GM12878 (cell line): ENCODE measurements at regions of chr1 and their contacts with region 1.

Region 1: DNA sequence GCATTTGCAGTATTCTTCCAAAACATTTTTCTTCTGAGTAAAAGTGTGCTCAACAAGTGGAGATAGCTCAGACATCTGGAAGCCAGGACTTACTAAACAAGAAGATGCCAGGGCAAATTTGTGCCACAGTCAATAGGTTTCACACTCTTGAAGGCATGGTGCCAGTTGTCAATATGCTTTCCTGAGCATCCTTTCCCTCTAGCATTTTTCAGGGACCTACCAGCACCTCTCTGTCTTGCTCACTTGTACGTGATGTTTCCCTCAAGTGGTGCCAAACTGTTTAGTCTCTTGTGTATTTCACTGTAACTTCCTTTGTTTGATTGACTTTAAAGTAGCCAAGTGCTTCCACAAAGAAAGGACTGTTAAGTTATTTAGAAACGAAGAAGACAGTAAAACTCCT is 194.0 kb upstream of the SGIP1 start:
- DNase-seq: no peak
- ATAC-seq: peak; percentile 8
- H3K4me3 ChIP-seq: peak overlapping the region; percentile 42
- H3K27ac ChIP-seq: peak overlapping the region; percentile 83
- H3K4me1 ChIP-seq: peaks cover 21% of the 10 kb centered on the region
- H3K27me3 ChIP-seq: no peaks in the 10 kb centered on the region
- CTCF ChIP-seq: no peak
- EP300 ChIP-seq: no peak
- POLR2A ChIP-seq: no peak
- RAD21 ChIP-seq: no peak

Region 2: DNA sequence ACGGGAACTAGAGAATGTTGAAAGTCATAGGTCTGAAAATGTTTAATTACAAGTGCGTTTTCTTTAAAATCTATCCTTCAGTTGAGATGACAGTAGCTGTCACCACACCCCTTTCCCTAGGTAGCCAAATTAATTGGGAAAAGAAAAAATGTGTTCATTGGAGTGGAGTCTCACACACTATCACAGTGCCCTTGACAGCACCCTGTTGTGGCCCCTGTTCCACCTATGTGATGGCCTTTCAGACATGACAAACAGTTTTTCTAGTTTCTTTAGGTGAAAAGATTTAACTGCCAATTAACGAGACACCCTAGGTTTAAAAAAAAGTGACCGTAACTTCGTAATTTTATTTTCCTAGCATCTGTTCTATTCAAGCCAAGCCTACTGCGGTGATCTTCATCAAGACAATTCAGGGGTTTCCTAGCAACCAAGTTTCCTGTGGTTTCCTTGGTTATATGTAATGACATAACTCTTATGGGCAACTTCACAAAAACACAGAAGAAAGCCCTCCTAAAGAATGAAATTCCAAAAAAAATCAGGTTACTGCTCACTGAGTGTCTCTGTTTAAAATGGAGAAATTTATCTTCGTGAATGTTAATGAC is 249.0 kb before region 1 on chr1:
- CTCF ChIA-PET with region 1: no interaction called
- POLR2A ChIA-PET with region 1: no interaction called
- RAD21 ChIA-PET with region 1: no interaction called
- SMC1A ChIA-PET with region 1: no interaction called
- in situ Hi-C with region 1: no loop called
- intact Hi-C with region 1: no loop called
- DNase-seq: no peak
- ATAC-seq: no peak
- H3K4me3 ChIP-seq: no peak overlapping the region
- H3K27ac ChIP-seq: no peak overlapping the region
- H3K4me1 ChIP-seq: no peaks in the 10 kb centered on the region
- H3K27me3 ChIP-seq: no peaks in the 10 kb centered on the region
- CTCF ChIP-seq: no peak
- EP300 ChIP-seq: no peak
- POLR2A ChIP-seq: no peak
- RAD21 ChIP-seq: no peak

Region 3: DNA sequence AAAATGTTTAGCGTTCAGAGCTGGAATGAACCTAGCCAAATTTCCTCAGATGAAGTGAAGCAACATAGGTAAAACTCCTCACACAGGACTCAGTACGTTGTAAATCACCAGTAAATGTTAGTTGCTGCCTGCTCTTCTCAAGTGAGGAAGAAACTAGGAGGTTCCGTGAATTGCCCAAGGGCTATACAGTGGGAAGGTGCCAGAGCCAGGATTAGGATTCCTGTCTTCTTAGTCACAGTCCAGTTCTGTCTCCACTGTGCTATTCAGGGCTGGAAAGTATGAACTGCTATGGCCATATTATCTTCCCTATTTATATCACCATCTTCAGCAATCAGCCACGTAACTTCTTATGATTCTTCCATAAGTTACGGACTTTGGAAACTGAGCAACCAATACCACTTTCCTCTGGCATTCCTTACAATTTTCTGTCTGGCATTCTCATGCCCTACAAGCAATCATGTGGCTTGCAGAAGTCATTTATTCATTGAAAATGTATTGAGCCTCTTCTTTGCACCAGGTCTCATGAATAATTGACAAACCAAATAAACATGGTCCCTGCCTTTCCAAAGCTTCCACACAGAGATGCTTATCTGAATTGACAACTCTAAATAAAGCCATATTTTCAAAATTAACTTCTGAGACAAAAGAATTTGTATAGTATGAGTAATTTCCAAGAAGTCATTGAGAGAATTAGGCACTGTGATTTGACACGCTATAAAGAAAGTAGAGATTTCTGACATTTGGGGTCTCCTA is 77.6 kb before region 1 on chr1:
- CTCF ChIA-PET with region 1: interaction called, 14 read pairs
- POLR2A ChIA-PET with region 1: no interaction called
- RAD21 ChIA-PET with region 1: interaction called, 131 read pairs
- SMC1A ChIA-PET with region 1: interaction called, 153 read pairs
- in situ Hi-C with region 1: no loop called
- intact Hi-C with region 1: no loop called
- DNase-seq: no peak
- ATAC-seq: no peak
- H3K4me3 ChIP-seq: no peak overlapping the region
- H3K27ac ChIP-seq: no peak overlapping the region
- H3K4me1 ChIP-seq: peaks cover 4% of the 10 kb centered on the region; the same call in 1 of the 2 replicates
- H3K27me3 ChIP-seq: no peaks in the 10 kb centered on the region
- CTCF ChIP-seq: no peak
- EP300 ChIP-seq: no peak
- POLR2A ChIP-seq: no peak
- RAD21 ChIP-seq: no peak

Region 4: DNA sequence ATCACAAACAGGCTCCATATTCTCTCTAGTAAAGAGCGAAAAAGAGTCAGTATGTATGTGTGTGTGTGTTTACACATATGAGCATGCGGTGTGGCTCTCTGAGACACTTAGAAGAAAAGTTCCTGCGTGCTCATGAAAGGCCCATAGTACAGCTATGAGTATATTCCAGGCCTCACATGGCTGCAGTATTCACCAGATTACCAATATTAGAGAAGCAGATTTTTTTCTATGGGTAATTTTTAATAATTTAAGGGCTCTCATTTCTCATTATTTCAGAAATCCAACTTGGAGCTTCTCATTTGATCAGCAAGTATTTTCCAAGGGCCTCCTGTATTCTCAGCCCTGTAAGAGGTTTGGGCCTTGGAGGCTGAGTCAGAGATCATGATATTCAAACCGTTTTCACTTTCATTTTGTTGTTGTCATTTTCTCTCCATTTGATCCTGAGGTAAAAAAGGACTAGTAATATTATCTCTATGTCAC is 38.9 kb before region 1 on chr1:
- CTCF ChIA-PET with region 1: interaction called, 4 read pairs
- POLR2A ChIA-PET with region 1: interaction called, 6 read pairs
- RAD21 ChIA-PET with region 1: interaction called, 13 read pairs
- SMC1A ChIA-PET with region 1: interaction called, 6 read pairs
- in situ Hi-C with region 1: no loop called
- intact Hi-C with region 1: no loop called
- DNase-seq: peak; percentile 53
- ATAC-seq: peak; percentile 92
- H3K4me3 ChIP-seq: peak overlapping the region; percentile 56; the same call in 1 of the 2 replicates
- H3K27ac ChIP-seq: peak overlapping the region; percentile 63
- H3K4me1 ChIP-seq: peaks cover 22% of the 10 kb centered on the region; the same call in 1 of the 2 replicates
- H3K27me3 ChIP-seq: no peaks in the 10 kb centered on the region
- CTCF ChIP-seq: no peak
- EP300 ChIP-seq: no peak
- POLR2A ChIP-seq: no peak
- RAD21 ChIP-seq: no peak

Region 5: GRCh38 chr1:66396212-66396890 is 56.4 kb after region 1 on chr1:
- CTCF ChIA-PET with region 1: interaction called, 7 read pairs
- POLR2A ChIA-PET with region 1: interaction called, 4 read pairs
- RAD21 ChIA-PET with region 1: interaction called, 14 read pairs
- SMC1A ChIA-PET with region 1: interaction called, 23 read pairs
- in situ Hi-C with region 1: no loop called
- intact Hi-C with region 1: loop called (anchors 2 kb)
- DNase-seq: peak; percentile 71
- ATAC-seq: peak; percentile 76
- H3K4me3 ChIP-seq: no peak overlapping the region
- H3K27ac ChIP-seq: peak overlapping the region; percentile 80
- H3K4me1 ChIP-seq: peaks cover 75% of the 10 kb centered on the region
- H3K27me3 ChIP-seq: no peaks in the 10 kb centered on the region
- CTCF ChIP-seq: no peak
- EP300 ChIP-seq: peak in 1 of 2 experiments; percentile 52; a peak in 2 of 4 replicates
- POLR2A ChIP-seq: no peak
- RAD21 ChIP-seq: no peak; the same call in 1 of the 2 replicates

Region 6: GRCh38 chr1:66436378-66437145 is 96.6 kb after region 1 on chr1:
- CTCF ChIA-PET with region 1: interaction called, 150 read pairs
- POLR2A ChIA-PET with region 1: no interaction called
- RAD21 ChIA-PET with region 1: interaction called, 11 read pairs
- SMC1A ChIA-PET with region 1: interaction called, 80 read pairs
- in situ Hi-C with region 1: no loop called
- intact Hi-C with region 1: no loop called
- DNase-seq: peak; percentile 44
- ATAC-seq: peak; percentile 85
- H3K4me3 ChIP-seq: no peak overlapping the region
- H3K27ac ChIP-seq: peak overlapping the region; percentile 7; the same call in 1 of the 2 replicates
- H3K4me1 ChIP-seq: peaks cover 31% of the 10 kb centered on the region
- H3K27me3 ChIP-seq: no peaks in the 10 kb centered on the region
- CTCF ChIP-seq: peak; percentile 27 to 56 (median 50); a peak in 5 of 6 replicates
- EP300 ChIP-seq: no peak
- POLR2A ChIP-seq: no peak
- RAD21 ChIP-seq: peak; percentile 58